Endothelial cell of umbilical vein (primary cell): ENCODE measurements at regions of chr7 and their contacts with region 1.

Region 1: DNA sequence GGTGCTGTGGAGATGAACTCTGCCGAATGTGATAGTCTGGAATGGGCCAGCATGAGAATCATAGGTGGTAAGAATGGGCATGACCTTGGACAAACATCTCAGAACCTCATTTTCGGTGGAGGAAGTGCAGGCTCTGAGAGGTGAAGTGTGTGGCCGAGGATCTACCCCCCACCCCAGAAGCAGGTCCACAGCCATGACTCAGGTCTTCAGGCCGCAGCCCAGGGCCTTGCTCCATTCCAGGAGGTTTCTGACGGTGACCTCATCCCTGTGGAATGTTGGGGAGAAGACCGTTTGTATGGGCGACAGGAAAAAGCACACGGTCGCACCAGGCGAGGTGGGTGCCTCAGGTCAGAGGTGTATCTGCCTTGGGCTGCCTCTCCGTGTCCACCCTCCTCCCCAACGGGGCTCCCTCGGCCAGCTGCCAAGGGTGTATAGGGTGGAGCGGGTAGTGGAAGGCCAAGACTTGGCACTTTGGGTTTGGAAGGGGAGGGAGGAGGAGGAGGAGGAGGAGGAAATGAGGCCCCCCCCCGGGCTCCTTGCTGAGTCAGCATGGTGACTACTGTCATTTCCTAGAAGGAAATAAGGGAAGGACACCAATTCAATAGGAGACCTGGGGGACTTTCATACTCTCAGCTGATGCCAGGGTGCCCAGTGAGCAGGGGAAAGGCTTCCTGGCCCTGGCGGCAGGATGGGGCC is 168.0 kb upstream of the RHEB start:
- DNase-seq: peak; percentile 86
- H3K4me3 ChIP-seq: no peak overlapping the region
- H3K27ac ChIP-seq: peak overlapping the region; percentile 70
- H3K4me1 ChIP-seq: peaks cover 24% of the 10 kb centered on the region
- H3K27me3 ChIP-seq: no peaks in the 10 kb centered on the region
- CTCF ChIP-seq: no peak
- POLR2A ChIP-seq: peak; percentile 46

Region 2: DNA sequence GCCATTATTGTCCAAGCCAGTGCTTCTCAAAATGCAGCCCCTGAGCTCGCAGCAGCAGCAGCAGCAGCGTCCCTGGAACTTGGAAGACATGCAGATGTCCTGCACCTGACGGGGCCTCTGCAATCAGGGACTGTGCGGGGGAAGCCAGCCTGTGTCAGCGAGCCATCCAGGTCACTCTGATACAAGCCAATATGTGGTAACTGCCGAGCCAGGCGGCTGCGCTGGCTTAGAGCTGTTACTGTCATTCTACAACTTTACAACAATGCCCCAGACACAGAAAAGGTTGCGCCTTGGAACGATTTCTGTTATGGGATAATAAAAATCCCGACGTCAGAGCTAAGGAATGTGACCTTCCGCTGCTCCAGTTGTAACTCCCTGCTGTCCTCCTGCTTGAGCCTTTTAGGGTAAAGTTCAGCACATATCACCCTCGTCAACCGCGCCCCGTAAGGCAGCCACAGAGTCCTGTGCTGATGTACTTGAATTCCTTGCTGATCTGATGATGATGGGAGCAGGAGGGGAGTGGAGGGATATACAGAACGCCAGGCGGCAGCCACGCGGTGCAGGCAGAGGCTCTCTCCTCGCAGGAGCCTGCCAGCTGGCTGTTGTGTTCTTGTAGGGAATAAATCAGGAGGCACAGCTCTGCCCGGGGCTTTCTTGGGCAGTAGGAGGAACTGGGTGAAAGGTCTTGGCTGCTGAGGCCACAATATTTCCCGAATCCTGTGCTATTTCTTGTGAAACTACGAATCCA is 227.8 kb before region 1 on chr7:
- CTCF ChIA-PET with region 1: no interaction called
- POLR2A ChIA-PET with region 1: no interaction called
- dilution Hi-C with region 1: no loop called
- intact Hi-C with region 1: loop called (anchors 5 kb)
- DNase-seq: peak; percentile 86
- H3K4me3 ChIP-seq: peak overlapping the region in 1 of 3 experiments; percentile 17
- H3K27ac ChIP-seq: peak overlapping the region; percentile 34
- H3K4me1 ChIP-seq: peaks cover 22% of the 10 kb centered on the region
- H3K27me3 ChIP-seq: no peaks in the 10 kb centered on the region
- CTCF ChIP-seq: peak in 1 of 2 donors; percentile 17
- POLR2A ChIP-seq: no peak

Region 3: DNA sequence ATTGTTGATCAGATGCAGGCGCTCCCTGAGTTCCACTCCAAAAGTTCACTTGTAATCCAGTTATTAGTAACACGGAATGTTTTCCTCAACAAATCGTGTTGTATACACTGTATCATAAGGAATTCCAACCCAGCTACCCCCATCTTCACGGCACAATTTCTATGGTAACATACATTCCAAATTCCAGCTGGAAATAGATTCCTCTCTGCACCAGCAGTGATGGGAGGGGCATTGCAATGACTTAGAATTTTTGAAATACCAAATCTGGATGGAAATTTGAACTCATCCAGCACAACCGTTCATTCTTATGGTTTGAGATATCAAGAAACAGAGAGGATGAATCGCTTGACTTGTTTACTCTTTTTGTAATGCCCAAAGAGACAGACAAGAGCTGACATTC is 129.1 kb before region 1 on chr7:
- CTCF ChIA-PET with region 1: no interaction called
- POLR2A ChIA-PET with region 1: no interaction called
- dilution Hi-C with region 1: no loop called
- intact Hi-C with region 1: no loop called
- DNase-seq: no peak
- H3K4me3 ChIP-seq: no peak overlapping the region
- H3K27ac ChIP-seq: no peak overlapping the region
- H3K4me1 ChIP-seq: no peaks in the 10 kb centered on the region
- H3K27me3 ChIP-seq: no peaks in the 10 kb centered on the region
- CTCF ChIP-seq: no peak
- POLR2A ChIP-seq: no peak

Region 4: DNA sequence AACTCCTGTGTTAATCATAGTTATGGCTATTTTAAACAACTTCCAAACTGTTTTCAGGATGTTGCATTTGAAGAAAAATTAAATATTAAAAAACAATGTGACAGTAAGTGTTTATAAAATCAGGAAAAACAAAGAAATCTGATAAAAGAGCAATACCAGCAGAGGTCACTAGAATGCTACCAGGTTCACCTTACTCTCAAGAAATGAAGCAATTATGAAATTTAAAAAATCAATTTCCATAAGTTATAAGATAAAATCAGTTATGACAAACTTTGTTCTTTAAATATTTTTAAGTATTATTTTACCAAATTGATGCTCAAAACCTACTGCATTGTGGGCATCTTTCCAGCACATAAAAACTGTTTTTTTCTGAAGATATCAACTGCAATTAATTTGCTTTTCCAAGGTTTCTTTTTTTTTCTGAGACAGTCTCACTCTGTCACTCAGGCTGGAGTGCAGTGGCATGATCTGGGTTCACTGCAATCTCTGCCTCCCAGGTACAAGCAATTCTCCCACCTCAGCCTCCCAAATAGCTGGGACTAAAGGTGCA is 117.2 kb before region 1 on chr7:
- CTCF ChIA-PET with region 1: no interaction called
- POLR2A ChIA-PET with region 1: no interaction called
- dilution Hi-C with region 1: no loop called
- intact Hi-C with region 1: loop called (anchors 5 kb)
- DNase-seq: peak; percentile 61
- H3K4me3 ChIP-seq: no peak overlapping the region
- H3K27ac ChIP-seq: no peak overlapping the region
- H3K4me1 ChIP-seq: no peaks in the 10 kb centered on the region
- H3K27me3 ChIP-seq: no peaks in the 10 kb centered on the region
- CTCF ChIP-seq: peak; percentile 37
- POLR2A ChIP-seq: no peak

Region 5: DNA sequence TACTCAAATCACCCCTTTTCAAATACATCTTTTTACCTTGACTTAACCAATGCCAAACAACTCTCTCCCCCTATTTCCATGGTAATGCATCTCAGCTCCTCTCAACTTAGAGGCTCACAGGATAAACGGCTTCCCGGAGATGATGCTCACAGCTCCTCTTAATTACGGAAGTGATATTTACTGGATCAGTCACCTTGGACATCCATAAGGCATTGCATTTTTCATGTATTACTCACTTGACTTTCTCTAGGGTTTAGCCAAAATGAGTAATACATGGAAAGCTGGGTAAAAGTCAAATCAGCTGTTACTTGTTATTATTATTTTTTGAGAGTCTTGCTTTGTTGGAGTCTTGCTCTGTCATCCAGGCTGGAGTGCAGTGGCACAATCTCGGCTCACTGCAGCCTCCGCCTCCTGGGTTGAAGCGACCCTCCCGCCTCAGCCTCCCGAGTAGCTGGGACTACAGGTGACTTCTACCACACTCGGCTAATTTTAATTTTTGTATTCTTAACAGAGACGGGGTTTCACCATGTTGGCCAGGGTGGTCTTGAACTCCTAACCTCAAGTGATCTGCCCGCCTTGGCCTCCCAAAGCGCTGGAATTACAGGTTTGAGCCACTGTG is 94.7 kb before region 1 on chr7:
- CTCF ChIA-PET with region 1: no interaction called
- POLR2A ChIA-PET with region 1: interaction called, 3 read pairs
- dilution Hi-C with region 1: no loop called
- intact Hi-C with region 1: loop called (anchors 5 kb)
- DNase-seq: peak; percentile 76
- H3K4me3 ChIP-seq: no peak overlapping the region
- H3K27ac ChIP-seq: peak overlapping the region; percentile 36
- H3K4me1 ChIP-seq: peaks cover 39% of the 10 kb centered on the region
- H3K27me3 ChIP-seq: no peaks in the 10 kb centered on the region
- CTCF ChIP-seq: no peak
- POLR2A ChIP-seq: no peak

Region 6: DNA sequence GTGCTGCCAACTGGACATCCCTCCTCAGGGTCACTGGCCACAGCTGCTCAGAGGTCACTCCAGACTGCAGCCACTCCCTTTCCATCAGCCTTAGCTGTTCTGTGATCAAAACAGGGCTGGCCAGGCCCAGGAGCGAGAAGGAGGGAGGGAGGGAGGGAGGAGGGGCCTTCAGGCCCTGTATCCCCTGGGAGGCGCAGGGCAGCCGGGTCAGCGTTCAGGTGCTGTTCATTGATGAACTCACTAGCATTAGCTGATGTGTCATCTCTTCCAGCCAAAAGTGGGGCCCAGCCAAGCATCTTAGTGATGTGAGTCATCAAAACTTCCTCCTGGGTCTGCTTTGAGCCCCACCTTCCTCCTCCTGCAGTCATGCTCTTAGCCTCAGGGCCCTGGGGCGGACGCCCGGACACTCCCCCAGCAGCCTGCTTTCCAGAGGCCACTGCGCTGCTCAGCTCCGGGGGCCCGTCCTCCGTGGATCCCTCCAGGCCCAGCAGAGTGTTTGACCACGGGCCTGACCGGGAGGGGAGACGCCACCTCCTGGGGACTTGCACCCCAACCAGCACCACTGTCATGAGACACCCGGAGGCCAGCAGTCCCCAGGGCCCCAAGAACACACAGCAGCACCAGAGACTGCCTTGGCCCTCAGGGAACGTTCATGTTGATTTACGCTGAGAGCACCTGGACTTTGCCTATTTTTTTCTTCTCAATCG is 40.1 kb after region 1 on chr7:
- CTCF ChIA-PET with region 1: no interaction called
- POLR2A ChIA-PET with region 1: no interaction called
- dilution Hi-C with region 1: no loop called
- intact Hi-C with region 1: loop called (anchors 5 kb)
- DNase-seq: peak; percentile 87
- H3K4me3 ChIP-seq: no peak overlapping the region
- H3K27ac ChIP-seq: peak overlapping the region; percentile 65
- H3K4me1 ChIP-seq: peaks cover 11% of the 10 kb centered on the region
- H3K27me3 ChIP-seq: no peaks in the 10 kb centered on the region
- CTCF ChIP-seq: no peak
- POLR2A ChIP-seq: no peak